Heart right ventricle (tissue), 16 donors: ENCODE measurements at regions of chrX and their contacts with region 1.

Region 1: GRCh38 chrX:57900975-57901374 is 9.3 kb downstream of the ZXDA start:
- DNase-seq: peak in 1 of 2 donors; percentile 18
- ATAC-seq: peak in 7 of 8 donors; percentile 71 to 93 (median 87)
- H3K4me3 ChIP-seq: peak overlapping the region in 5 of 10 donors; percentile 10 to 34 (median 27)
- H3K27ac ChIP-seq: peak overlapping the region; percentile 27 to 88 (median 53)
- H3K4me1 ChIP-seq: peaks cover 0 to 65% (median 15%) of the 10 kb centered on the region in 9 donors
- H3K27me3 ChIP-seq: peaks cover 0 to 10% (median 0%) of the 10 kb centered on the region in 7 donors
- CTCF ChIP-seq: no peak

Region 2: GRCh38 chrX:57367649-57368048 is 533.3 kb before region 1 on chrX:
- intact Hi-C with region 1: no loop called
- DNase-seq: no peak
- ATAC-seq: no peak
- H3K4me3 ChIP-seq: no peak overlapping the region
- H3K27ac ChIP-seq: no peak overlapping the region
- H3K4me1 ChIP-seq: no peaks in the 10 kb centered on the region
- H3K27me3 ChIP-seq: peaks cover 0 to 10% (median 0%) of the 10 kb centered on the region in 7 donors
- CTCF ChIP-seq: no peak

Region 3: GRCh38 chrX:57595381-57595811 is 305.6 kb before region 1 on chrX:
- intact Hi-C with region 1: loop called in 2 of 10 experiments (anchors 10 kb)
- DNase-seq: peak in 1 of 2 donors; percentile 5
- ATAC-seq: peak in 2 of 8 donors; percentile 8 to 13
- H3K4me3 ChIP-seq: peak overlapping the region in 5 of 10 donors; percentile 20 to 32 (median 25)
- H3K27ac ChIP-seq: peak overlapping the region in 6 of 10 donors; percentile 24 to 53 (median 38)
- H3K4me1 ChIP-seq: peaks cover 0 to 43% (median 22%) of the 10 kb centered on the region in 9 donors
- H3K27me3 ChIP-seq: peaks cover 0 to 8% (median 0%) of the 10 kb centered on the region in 7 donors
- CTCF ChIP-seq: no peak

Region 4: DNA sequence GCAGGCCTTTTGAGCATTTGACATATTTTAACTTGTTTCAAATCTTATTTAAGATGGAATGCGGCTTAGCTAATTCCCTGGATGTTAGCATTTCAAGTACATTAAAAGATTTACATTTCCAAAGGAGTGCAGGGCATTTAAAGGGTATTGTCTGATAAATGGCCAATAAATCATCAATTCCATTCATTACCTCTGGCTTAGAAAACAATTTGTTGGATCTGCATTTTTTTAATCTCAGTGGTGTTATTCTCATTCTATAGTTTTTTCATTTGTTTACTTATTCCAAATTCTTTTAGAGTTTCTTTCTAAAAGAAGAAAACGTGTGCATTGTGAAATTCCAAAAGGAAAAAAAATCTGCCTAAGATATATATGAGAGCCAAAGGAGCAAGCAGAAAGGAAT is 219.6 kb before region 1 on chrX:
- intact Hi-C with region 1: no loop called
- DNase-seq: no peak
- ATAC-seq: no peak
- H3K4me3 ChIP-seq: no peak overlapping the region
- H3K27ac ChIP-seq: no peak overlapping the region
- H3K4me1 ChIP-seq: no peaks in the 10 kb centered on the region
- H3K27me3 ChIP-seq: peaks cover 0 to 11% (median 0%) of the 10 kb centered on the region in 7 donors
- CTCF ChIP-seq: no peak